ENCODE measurements at regions of chr6 and their contacts with region 1.

Region 1: DNA sequence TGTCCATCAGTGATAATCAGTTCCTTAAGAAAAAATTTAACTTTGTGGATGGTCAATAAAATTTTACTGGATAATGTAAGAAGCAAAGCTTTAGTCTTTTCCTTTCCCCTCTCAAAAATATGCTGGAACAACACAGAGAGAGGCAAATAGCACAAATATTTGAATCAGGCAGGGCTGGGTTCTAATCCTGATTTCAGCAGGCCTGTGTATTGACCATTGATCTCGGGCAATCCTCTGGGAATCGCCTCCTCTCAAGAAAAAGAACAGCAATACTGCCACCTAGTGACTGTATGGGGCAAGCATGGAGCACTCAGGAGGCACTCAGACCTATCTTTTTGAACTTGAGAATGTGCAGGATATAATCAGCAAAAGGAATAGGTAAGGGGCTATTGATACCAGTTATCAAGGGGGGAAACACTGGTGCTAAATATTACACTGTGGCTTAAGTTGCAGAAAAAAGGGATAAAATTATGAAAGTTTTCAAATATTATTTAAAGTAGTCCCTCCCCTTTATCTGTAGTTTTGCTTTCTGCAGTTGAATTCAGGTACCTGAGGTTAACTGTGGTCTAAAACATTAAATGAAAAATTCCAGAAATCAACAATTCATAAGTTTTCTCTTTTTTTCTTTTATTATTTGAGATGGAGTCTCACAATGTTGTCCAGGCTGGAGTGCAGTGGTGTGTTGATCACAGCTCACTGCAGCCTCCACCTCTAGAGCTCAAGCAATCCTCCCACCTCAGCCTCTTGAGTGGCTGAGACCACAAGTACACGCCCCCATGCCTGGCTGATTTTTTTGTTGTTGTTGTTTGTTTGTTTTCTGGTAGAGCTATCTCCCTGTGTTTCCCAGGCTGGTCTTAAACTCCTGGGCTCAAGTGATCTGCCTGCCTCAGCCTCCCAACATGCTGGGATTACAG is 91.8 kb upstream of the NHSL1 start:
- DNase-seq: peak; percentile 75
- H3K4me3 ChIP-seq: no peak overlapping the region
- CTCF ChIP-seq: peak; percentile 91

Region 2: DNA sequence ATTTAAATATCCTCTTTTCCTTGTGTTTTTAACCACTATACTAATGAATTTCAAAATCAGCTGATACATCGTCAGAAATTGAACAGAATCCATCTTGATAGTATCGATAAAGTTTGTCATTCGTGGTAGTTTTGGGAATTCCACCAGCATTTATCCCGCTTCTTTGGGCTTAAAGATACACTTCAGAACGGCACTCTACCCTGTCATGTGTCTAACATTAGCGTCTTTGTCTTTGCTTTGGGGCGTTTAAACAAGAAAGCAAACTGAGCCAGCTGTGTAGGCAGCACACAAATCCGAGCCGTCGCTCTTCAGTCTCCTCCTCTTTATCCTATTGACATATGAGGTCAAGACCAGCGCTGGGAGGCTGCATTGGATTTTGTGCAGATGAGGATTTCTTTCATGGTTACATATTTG is 64.2 kb before region 1 on chr6:
- in situ Hi-C with region 1: no loop called
- DNase-seq: no peak
- H3K4me3 ChIP-seq: no peak overlapping the region
- CTCF ChIP-seq: no peak

Region 3: GRCh38 chr6:138765896-138766655 is 175.0 kb after region 1 on chr6:
- in situ Hi-C with region 1: loop called (anchors 5 kb)
- DNase-seq: peak; percentile 39
- H3K4me3 ChIP-seq: no peak overlapping the region
- CTCF ChIP-seq: peak; percentile 32